GM18951 (cell line): ENCODE measurements at regions of chr9 and their contacts with region 1.

Region 1: DNA sequence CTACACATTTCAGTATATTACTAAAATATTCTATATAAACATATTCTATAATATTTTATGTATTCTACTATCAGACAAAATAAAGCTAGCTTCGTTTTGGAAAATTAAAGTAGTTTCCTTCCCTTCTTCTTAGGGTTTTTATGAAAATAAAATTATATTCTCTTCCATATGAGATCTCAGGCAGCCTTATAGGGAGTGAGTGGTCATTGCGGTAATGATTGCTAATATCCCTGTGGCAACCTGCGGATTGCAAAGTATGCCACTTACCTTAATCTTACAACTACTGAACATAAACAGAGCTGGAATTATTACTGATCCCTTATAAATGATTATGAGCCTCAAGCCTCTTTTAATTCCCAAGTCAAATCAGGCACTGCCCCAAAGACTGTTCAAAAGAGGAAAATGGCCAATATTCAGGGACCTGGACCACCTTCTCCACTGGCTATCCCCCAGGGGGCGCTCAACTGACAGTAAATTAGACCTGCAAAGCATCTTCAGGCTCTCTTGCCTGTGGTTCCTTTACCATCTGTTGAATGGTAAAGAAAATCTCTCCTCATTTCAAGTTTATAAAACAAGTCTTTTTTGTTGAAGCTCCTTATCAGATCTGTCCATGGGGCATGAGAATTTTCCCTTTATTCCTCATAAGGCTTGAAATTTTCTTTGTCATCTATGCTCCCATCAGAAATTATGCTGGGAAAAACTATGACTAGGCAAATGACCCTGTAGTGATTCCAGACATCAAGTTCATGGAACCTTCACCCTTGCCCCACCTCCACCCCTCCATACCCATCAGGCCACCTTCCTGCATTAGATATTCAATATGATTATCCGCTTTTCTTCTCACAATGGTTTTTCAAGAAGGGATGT is 163.9 kb downstream of the CEMIP2 start:
- POLR2A ChIP-seq: no peak

Region 2: GRCh38 chr9:71333321-71333720 is 271.1 kb before region 1 on chr9:
- in situ Hi-C with region 1: no loop called
- POLR2A ChIP-seq: no peak

Region 3: DNA sequence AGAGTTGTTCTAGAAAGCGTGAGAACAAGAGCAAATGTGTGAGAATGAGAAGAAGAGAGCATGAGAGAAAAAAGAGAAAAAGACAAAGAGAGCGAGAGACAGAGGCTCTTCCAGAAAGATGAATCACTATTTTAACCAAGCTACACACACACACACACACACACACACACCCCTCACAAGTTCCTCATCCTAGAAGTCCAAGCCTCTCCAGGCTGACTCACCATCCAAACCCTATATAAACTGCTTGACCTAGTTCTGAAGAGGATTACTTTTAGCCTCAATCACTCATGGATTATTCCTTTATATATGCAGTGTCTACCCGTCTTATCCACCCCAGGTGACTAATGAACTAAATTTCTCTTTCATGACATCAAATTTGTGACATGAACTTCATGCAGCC is 418.4 kb after region 1 on chr9:
- in situ Hi-C with region 1: loop called (anchors 25 kb)
- POLR2A ChIP-seq: no peak